Activated CD4-positive, alpha-beta T cell treated with anti-CD3 and anti-CD28 coated beads for 36 hours (primary cell): ENCODE measurements at regions of chr2 and their contacts with region 1.

Region 1: GRCh38 chr2:149597668-149598326 is 10.2 kb upstream of the MMADHC start:
- DNase-seq: peak; percentile 57
- ATAC-seq: peak; percentile 100
- H3K4me3 Mint-ChIP-seq: no peak overlapping the region
- H3K27ac Mint-ChIP-seq: peak overlapping the region; percentile 0
- H3K4me1 Mint-ChIP-seq: peaks cover 22% of the 10 kb centered on the region
- H3K27me3 Mint-ChIP-seq: no peaks in the 10 kb centered on the region

Region 2: GRCh38 chr2:149313512-149313972 is 284.3 kb before region 1 on chr2:
- CTCF ChIA-PET with region 1: no interaction called
- POLR2A ChIA-PET with region 1: no interaction called
- intact Hi-C with region 1: no loop called
- DNase-seq: peak; percentile 15
- ATAC-seq: peak; percentile 61
- H3K4me3 Mint-ChIP-seq: no peak overlapping the region
- H3K27ac Mint-ChIP-seq: no peak overlapping the region
- H3K4me1 Mint-ChIP-seq: no peaks in the 10 kb centered on the region
- H3K27me3 Mint-ChIP-seq: peaks cover 9% of the 10 kb centered on the region

Region 3: GRCh38 chr2:149645391-149645790 is 47.6 kb after region 1 on chr2:
- CTCF ChIA-PET with region 1: no interaction called
- POLR2A ChIA-PET with region 1: no interaction called
- intact Hi-C with region 1: loop called in 1 of 2 experiments (anchors 2 kb)
- DNase-seq: no peak
- ATAC-seq: no peak
- H3K4me3 Mint-ChIP-seq: no peak overlapping the region
- H3K27ac Mint-ChIP-seq: no peak overlapping the region
- H3K4me1 Mint-ChIP-seq: no peaks in the 10 kb centered on the region
- H3K27me3 Mint-ChIP-seq: peaks cover 17% of the 10 kb centered on the region

Region 4: GRCh38 chr2:149715005-149715592 is 117.3 kb after region 1 on chr2:
- CTCF ChIA-PET with region 1: no interaction called
- POLR2A ChIA-PET with region 1: no interaction called
- intact Hi-C with region 1: loop called (anchors 1 to 5 kb)
- DNase-seq: peak; percentile 4
- ATAC-seq: no peak
- H3K4me3 Mint-ChIP-seq: no peak overlapping the region
- H3K27ac Mint-ChIP-seq: no peak overlapping the region
- H3K4me1 Mint-ChIP-seq: no peaks in the 10 kb centered on the region
- H3K27me3 Mint-ChIP-seq: peaks cover 4% of the 10 kb centered on the region

Region 5: DNA sequence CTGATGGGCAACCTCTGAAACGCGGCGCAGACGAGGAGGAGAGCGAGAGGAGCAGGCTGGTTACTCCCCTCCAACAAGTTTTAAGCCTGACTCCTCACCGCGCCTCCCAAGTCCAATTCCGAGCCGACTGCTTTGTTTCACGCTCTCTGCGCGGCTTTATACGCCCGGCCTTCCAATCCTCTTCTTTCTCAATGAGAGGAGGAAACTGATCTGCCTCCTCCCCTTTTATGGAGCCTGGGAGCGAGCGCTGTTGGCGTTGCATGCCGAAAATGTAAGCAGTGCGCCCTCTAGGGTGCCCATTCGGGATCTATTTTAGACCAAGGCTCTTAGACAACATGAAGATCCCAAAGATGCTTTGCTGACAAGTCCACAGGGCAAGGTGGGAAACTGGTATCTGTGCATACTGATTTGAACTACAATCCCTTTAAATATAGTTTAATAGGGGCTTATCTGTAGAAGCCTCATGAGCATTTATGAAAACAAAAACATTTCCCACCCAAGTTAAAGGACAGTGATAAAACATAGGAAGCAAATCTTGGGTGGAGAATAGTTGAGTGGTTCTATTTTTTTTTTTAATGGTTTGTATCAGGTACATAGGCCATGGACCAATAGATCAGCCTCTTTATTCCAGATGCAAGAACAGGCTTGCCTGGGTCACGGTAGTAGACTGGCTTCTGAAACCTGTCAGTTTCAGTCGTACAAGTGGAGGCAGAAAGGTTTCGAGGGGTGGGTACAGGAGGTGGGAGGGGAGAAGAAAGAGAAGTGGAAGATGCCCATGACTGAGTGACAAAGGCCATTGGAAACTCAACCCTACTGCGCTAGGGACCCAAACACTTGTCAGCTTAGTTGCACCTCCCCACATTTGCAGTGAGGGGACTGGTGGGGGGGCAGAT is 890.0 kb after region 1 on chr2 and contains the start of gene RND3:
- CTCF ChIA-PET with region 1: interaction called, 3 read pairs
- POLR2A ChIA-PET with region 1: no interaction called
- intact Hi-C with region 1: loop called (anchors 1 kb)
- DNase-seq: peak; percentile 81
- ATAC-seq: peak; percentile 75
- H3K4me3 Mint-ChIP-seq: peak within 1 kb of the TSS; percentile 34
- H3K27ac Mint-ChIP-seq: no peak within 1 kb of the TSS
- H3K4me1 Mint-ChIP-seq: peaks cover 10% of the 10 kb centered on the region
- H3K27me3 Mint-ChIP-seq: peaks cover 57% of the 10 kb centered on the region
- total RNA-seq, gene RND3: not detected

Region 6: DNA sequence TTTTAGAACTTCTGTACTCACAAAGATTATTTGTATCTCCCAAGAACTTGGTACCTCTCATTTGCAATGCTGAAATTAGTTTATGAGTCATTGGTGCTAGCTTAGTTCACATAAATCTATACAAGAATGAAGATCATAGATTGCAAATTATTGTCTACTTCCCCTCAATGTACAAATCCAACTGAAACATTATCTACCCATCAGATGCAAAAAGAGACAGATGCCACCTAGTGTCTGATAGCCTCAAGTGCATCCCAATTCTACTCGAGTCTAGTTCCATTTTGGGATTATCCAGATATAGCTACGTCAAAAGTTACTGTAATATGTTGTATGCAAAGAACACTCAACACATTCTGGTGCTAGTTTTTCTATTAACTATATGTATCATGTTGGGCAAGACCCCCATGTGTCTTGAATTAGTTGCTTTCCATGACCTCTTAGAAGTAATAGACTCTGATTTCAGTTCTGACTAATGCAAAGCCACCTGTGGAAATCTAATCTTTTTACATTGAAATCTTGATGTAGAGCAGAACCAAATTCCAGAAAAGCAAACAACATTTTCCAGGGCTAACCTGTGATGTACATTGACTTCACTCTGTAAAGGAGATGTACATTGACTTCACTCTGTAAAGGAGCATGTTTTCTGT is 1453.9 kb after region 1 on chr2:
- CTCF ChIA-PET with region 1: no interaction called
- POLR2A ChIA-PET with region 1: no interaction called
- intact Hi-C with region 1: loop called in 1 of 2 experiments (anchors 1 kb)
- DNase-seq: peak; percentile 34
- ATAC-seq: no peak
- H3K4me3 Mint-ChIP-seq: no peak overlapping the region
- H3K27ac Mint-ChIP-seq: no peak overlapping the region
- H3K4me1 Mint-ChIP-seq: no peaks in the 10 kb centered on the region
- H3K27me3 Mint-ChIP-seq: peaks cover 2% of the 10 kb centered on the region

Region 7: GRCh38 chr2:151437630-151438029 is 1839.8 kb after region 1 on chr2:
- CTCF ChIA-PET with region 1: no interaction called
- POLR2A ChIA-PET with region 1: no interaction called
- intact Hi-C with region 1: loop called in 1 of 2 experiments (anchors 5 kb)
- DNase-seq: no peak
- ATAC-seq: peak; percentile 70
- H3K4me3 Mint-ChIP-seq: no peak overlapping the region
- H3K27ac Mint-ChIP-seq: no peak overlapping the region
- H3K4me1 Mint-ChIP-seq: peaks cover 2% of the 10 kb centered on the region
- H3K27me3 Mint-ChIP-seq: no peaks in the 10 kb centered on the region